ENCODE measurements at regions of chr6 and their contacts with region 1.

Region 1: GRCh38 chr6:36423101-36423824 is 19.4 kb downstream of the PXT1 start:
- DNase-seq: peak; percentile 98
- ATAC-seq: peak; percentile 96
- H3K4me3 ChIP-seq: peak overlapping the region; percentile 68 to 81 (median 76)
- H3K4me3 Mint-ChIP-seq: peak overlapping the region; percentile 97
- H3K27ac ChIP-seq: peak overlapping the region; percentile 57 to 68
- H3K27ac Mint-ChIP-seq: peak overlapping the region; percentile 94
- H3K4me1 ChIP-seq: peaks cover 9 to 14% of the 10 kb centered on the region in 2 donors
- H3K4me1 Mint-ChIP-seq: peaks cover 17% of the 10 kb centered on the region
- H3K27me3 ChIP-seq: no peaks in the 10 kb centered on the region
- H3K27me3 Mint-ChIP-seq: no peaks in the 10 kb centered on the region
- CTCF ChIP-seq: peak; percentile 69

Region 2: GRCh38 chr6:36360241-36361054 is 62.8 kb before region 1 on chr6:
- CTCF ChIA-PET with region 1: no interaction called
- POLR2A ChIA-PET with region 1: no interaction called
- intact Hi-C with region 1: no loop called
- DNase-seq: peak; percentile 82
- ATAC-seq: peak; percentile 83
- H3K4me3 ChIP-seq: no peak overlapping the region
- H3K4me3 Mint-ChIP-seq: no peak overlapping the region
- H3K27ac ChIP-seq: no peak overlapping the region
- H3K27ac Mint-ChIP-seq: no peak overlapping the region
- H3K4me1 ChIP-seq: peaks cover 20 to 33% of the 10 kb centered on the region in 2 donors
- H3K4me1 Mint-ChIP-seq: peaks cover 29% of the 10 kb centered on the region
- H3K27me3 ChIP-seq: no peaks in the 10 kb centered on the region
- H3K27me3 Mint-ChIP-seq: no peaks in the 10 kb centered on the region
- CTCF ChIP-seq: peak; percentile 83

Region 3: GRCh38 chr6:36442671-36443470 is 19.6 kb after region 1 on chr6 and contains the starts of genes KCTD20 and PXT1:
- CTCF ChIA-PET with region 1: interaction called, 7 read pairs
- POLR2A ChIA-PET with region 1: interaction called, 7 read pairs
- intact Hi-C with region 1: loop called (anchors 1 kb)
- DNase-seq: peak; percentile 88
- ATAC-seq: peak; percentile 87
- H3K4me3 ChIP-seq: peak within 1 kb of the TSS; percentile 80 to 97 (median 89)
- H3K4me3 Mint-ChIP-seq: peak within 1 kb of the TSS; percentile 98
- H3K27ac ChIP-seq: peak within 1 kb of the TSS; percentile 76 to 91
- H3K27ac Mint-ChIP-seq: peak within 1 kb of the TSS; percentile 96
- H3K4me1 ChIP-seq: peaks cover 24 to 26% of the 10 kb centered on the region in 2 donors
- H3K4me1 Mint-ChIP-seq: peaks cover 35% of the 10 kb centered on the region
- H3K27me3 ChIP-seq: no peaks in the 10 kb centered on the region
- H3K27me3 Mint-ChIP-seq: no peaks in the 10 kb centered on the region
- CTCF ChIP-seq: no peak
- total RNA-seq, gene KCTD20: 37.5 and 44.3 TPM in 2 replicates
- total RNA-seq, gene PXT1: 0.27 and 0.52 TPM in 2 replicates

Region 4: DNA sequence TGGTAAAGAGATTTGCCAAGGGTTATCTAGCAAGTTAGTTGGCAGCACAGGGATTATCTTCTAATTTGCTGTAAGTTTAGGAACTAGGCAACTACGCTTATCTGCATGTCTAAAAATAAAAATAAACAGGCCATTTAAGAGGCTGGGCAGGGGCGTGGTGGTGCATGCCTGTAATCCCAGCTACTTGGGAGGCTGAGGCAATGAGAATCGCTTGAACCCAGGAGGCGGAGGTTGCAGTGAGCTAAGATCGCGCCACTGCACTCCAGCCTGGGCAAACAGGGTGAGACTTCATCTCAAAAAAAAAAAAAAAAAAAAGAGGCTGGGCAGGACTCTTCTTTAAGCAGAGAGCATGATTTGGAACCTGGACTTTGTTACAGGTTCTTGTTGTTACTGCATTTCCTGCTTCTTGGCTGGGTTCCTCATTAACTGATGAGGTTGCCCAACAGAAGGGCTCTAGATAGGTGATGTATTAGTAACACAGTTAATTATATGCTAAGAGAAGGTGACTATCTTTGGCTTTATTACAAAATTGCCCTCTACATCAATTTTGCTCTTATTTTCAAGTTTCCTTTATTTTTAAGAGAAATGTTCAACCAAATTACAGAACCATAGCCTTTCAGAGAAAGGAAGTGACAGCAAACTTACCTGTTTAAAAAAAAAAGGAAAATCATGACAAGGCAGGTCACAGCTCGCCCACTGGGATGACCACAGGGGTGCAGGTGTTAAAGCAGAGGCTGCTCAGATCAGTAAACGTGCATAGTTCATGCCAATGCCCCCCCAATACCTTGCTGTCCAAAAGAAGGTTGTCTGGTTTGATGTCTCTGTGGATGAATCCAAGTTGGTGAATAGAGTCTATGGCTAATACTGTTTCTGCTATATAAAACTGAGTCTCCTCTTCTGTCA is 91.5 kb after region 1 on chr6:
- CTCF ChIA-PET with region 1: interaction called, 3 read pairs
- POLR2A ChIA-PET with region 1: interaction called, 3 read pairs
- intact Hi-C with region 1: loop called (anchors 10 kb)
- DNase-seq: no peak
- ATAC-seq: no peak
- H3K4me3 ChIP-seq: no peak overlapping the region
- H3K4me3 Mint-ChIP-seq: no peak overlapping the region
- H3K27ac ChIP-seq: no peak overlapping the region
- H3K27ac Mint-ChIP-seq: no peak overlapping the region
- H3K4me1 ChIP-seq: no peaks in the 10 kb centered on the region
- H3K4me1 Mint-ChIP-seq: no peaks in the 10 kb centered on the region
- H3K27me3 ChIP-seq: no peaks in the 10 kb centered on the region
- H3K27me3 Mint-ChIP-seq: no peaks in the 10 kb centered on the region
- CTCF ChIP-seq: no peak

Region 5: DNA sequence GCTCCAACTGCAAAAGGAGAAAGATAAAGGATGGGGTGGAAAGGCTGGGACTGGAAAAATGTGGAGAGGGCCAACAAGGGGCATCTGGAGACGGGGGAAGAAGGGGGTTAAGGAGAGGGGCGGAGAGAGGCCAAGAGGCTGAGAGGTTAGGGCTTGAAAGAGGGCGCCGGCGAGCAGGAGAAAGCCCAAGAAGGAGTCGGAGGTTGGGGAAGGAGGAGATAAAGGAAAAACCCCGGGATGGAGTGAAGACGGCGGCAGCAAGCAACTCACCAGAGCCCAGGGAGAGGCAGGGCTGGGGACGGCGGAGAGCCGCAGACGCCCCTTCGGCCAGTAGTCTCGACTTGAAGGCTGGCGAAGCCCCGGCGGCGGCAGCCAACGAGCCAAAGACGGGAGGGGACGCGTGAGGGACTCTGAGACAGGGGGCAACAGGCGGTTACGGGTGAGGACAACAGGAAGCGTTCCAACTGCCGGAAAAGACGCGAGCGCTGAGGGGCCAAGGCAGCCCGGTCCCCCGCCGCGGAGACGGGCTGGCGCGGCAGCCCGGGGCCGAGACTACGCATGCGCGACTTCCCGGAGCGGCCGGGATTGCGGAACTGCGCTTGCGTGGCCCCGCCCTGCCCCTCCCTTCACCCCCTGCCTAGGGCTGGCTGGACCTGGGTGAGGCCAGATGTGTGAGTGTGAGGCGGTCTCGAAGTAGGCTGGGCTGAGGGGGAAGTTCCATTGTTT is 123.8 kb after region 1 on chr6 and contains the start of gene STK38:
- CTCF ChIA-PET with region 1: no interaction called
- POLR2A ChIA-PET with region 1: no interaction called
- intact Hi-C with region 1: loop called (anchors 1 kb)
- DNase-seq: peak; percentile 95
- ATAC-seq: peak; percentile 85
- H3K4me3 ChIP-seq: peak within 1 kb of the TSS; percentile 70 to 96 (median 88)
- H3K4me3 Mint-ChIP-seq: peak within 1 kb of the TSS; percentile 94
- H3K27ac ChIP-seq: peak within 1 kb of the TSS; percentile 87 to 92
- H3K27ac Mint-ChIP-seq: peak within 1 kb of the TSS; percentile 91
- H3K4me1 ChIP-seq: peaks cover 52 to 60% of the 10 kb centered on the region in 2 donors
- H3K4me1 Mint-ChIP-seq: peaks cover 59% of the 10 kb centered on the region
- H3K27me3 ChIP-seq: no peaks in the 10 kb centered on the region
- H3K27me3 Mint-ChIP-seq: no peaks in the 10 kb centered on the region
- CTCF ChIP-seq: no peak
- total RNA-seq, gene STK38: 67.4 and 71.8 TPM in 2 replicates

Region 6: DNA sequence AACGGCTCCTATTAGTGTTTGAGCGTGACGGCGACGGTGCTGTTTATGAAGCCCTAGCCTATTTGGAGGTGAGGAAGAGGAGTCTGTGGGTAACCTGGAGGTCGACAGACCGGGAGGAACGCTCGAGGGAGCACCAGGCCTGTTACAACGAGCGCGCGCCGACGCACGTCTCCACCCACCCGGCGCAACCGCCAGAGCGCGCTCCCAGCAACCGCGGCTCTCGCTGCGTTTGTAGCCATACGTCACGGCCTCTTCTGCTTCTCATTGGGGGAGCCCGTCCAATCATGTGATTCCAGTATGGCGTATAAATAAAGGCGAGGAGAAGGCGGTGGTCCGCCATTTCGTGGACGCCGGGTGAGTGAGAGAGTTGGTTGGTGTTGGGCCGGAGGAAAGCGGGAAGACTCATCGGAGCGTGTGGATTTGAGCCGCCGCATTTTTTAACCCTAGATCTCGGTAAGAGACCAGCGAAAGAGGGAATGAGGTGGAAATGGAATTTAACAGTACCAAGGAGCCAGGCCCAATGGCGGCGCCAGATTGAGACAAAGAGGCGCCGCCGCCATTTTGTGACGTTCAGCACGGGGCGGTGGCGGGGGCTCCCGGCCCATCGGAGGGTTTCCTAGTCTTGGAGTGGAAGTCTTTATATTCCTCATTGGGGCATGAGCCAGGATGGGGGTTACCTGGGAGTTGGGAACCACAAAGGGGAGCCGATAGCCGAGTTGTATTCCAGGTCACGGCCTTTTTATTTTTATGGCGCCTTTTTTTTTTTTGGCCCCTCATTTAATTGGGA is 171.0 kb after region 1 on chr6 and contains the start of gene SRSF3:
- CTCF ChIA-PET with region 1: interaction called, 13 read pairs
- POLR2A ChIA-PET with region 1: interaction called, 3 read pairs
- intact Hi-C with region 1: loop called (anchors 1 kb)
- DNase-seq: peak; percentile 99
- ATAC-seq: peak; percentile 91
- H3K4me3 ChIP-seq: peak within 1 kb of the TSS; percentile 91 to 100 (median 97)
- H3K4me3 Mint-ChIP-seq: peak within 1 kb of the TSS; percentile 90
- H3K27ac ChIP-seq: peak within 1 kb of the TSS; percentile 93 to 99
- H3K27ac Mint-ChIP-seq: peak within 1 kb of the TSS; percentile 97
- H3K4me1 ChIP-seq: peaks cover 44 to 55% of the 10 kb centered on the region in 2 donors
- H3K4me1 Mint-ChIP-seq: peaks cover 48% of the 10 kb centered on the region
- H3K27me3 ChIP-seq: no peaks in the 10 kb centered on the region
- H3K27me3 Mint-ChIP-seq: no peaks in the 10 kb centered on the region
- CTCF ChIP-seq: peak; percentile 29
- total RNA-seq, gene SRSF3: 316 and 331 TPM in 2 replicates

Region 7: DNA sequence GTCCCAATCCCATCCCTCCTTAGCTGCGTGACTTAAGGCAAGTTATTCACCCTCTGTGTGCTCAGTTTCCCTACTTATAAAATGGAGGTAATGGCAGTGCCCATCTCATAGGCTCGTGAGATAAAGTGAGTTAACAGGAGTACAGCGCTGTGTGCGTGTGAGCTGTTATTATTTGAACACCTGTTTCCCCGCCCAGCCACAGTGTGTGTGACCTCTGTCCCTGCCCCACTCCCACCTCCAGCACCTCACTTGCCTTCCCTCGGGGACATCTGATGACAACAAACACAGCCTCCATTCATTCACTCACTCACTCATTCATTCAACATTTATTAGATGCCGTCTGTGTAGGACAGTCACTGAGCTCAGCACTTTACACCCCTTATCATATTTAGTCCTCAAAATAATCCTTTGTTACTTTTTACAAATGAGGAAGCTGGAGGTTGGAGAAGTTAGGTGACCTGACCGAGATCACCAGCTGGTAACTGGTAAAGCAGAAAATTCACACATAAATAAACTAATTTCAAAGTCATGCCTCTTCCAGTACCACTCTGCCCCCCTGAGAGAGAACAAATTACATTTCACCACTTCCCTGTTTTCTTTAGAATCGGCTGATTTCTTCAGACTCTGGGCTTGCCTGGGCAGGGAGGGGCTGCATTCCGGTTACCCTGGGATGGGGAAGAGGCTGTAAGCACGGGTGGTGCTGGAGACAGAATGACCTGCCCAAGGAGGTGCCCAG is 357.3 kb after region 1 on chr6:
- CTCF ChIA-PET with region 1: interaction called, 8 read pairs
- POLR2A ChIA-PET with region 1: no interaction called
- intact Hi-C with region 1: loop called (anchors 5 kb)
- DNase-seq: peak; percentile 54
- ATAC-seq: peak; percentile 42
- H3K4me3 ChIP-seq: no peak overlapping the region
- H3K4me3 Mint-ChIP-seq: peak overlapping the region; percentile 64
- H3K27ac ChIP-seq: peak overlapping the region in 1 of 2 donors; percentile 10
- H3K27ac Mint-ChIP-seq: peak overlapping the region; percentile 71
- H3K4me1 ChIP-seq: peaks cover 21 to 28% of the 10 kb centered on the region in 2 donors
- H3K4me1 Mint-ChIP-seq: peaks cover 27% of the 10 kb centered on the region
- H3K27me3 ChIP-seq: peaks cover 0 to 9% (median 0%) of the 10 kb centered on the region in 4 experiments
- H3K27me3 Mint-ChIP-seq: peaks cover 17% of the 10 kb centered on the region
- CTCF ChIP-seq: no peak

Region 8: DNA sequence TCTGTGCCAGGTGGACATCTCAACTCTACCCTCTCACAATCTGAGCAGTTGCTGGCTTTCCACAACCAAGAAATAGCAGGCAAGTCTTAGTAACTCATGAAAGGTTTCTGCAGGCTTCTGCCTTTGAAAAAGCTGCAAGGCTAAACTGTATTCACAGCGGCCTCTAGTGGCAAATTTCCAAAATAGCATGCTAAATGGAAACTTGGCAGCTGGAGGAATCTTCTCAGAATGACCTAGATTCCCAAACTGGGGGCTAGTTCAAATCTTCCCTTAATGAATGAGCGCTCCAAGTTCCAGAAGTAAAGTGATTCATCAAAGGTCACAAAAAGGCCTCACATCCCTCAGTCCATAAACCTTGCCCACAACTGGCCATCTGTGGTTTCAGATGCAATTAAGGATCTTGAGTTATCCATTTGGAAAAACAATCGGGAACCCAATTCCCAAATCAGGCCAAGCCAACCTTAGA is 427.9 kb after region 1 on chr6:
- CTCF ChIA-PET with region 1: interaction called, 7 read pairs
- POLR2A ChIA-PET with region 1: no interaction called
- intact Hi-C with region 1: loop called (anchors 10 kb)
- DNase-seq: peak; percentile 69
- ATAC-seq: peak; percentile 43
- H3K4me3 ChIP-seq: no peak overlapping the region
- H3K4me3 Mint-ChIP-seq: no peak overlapping the region
- H3K27ac ChIP-seq: no peak overlapping the region
- H3K27ac Mint-ChIP-seq: no peak overlapping the region
- H3K4me1 ChIP-seq: peaks cover 0 to 8% of the 10 kb centered on the region in 2 donors
- H3K4me1 Mint-ChIP-seq: peaks cover 8% of the 10 kb centered on the region
- H3K27me3 ChIP-seq: peaks cover 0 to 11% (median 5%) of the 10 kb centered on the region in 4 experiments
- H3K27me3 Mint-ChIP-seq: peaks cover 3% of the 10 kb centered on the region
- CTCF ChIP-seq: peak; percentile 83

Region 9: GRCh38 chr6:37679539-37680476 is 1256.5 kb after region 1 on chr6:
- CTCF ChIA-PET with region 1: no interaction called
- POLR2A ChIA-PET with region 1: no interaction called
- intact Hi-C with region 1: no loop called
- DNase-seq: peak; percentile 84
- ATAC-seq: peak; percentile 87
- H3K4me3 ChIP-seq: peak overlapping the region in 3 of 5 experiments; percentile 5 to 34 (median 12)
- H3K4me3 Mint-ChIP-seq: peak overlapping the region; percentile 82
- H3K27ac ChIP-seq: peak overlapping the region; percentile 67 to 77
- H3K27ac Mint-ChIP-seq: peak overlapping the region; percentile 94
- H3K4me1 ChIP-seq: peaks cover 24 to 42% of the 10 kb centered on the region in 2 donors
- H3K4me1 Mint-ChIP-seq: peaks cover 48% of the 10 kb centered on the region
- H3K27me3 ChIP-seq: no peaks in the 10 kb centered on the region
- H3K27me3 Mint-ChIP-seq: no peaks in the 10 kb centered on the region
- CTCF ChIP-seq: no peak